Thyroid gland (tissue), 4 donors: ENCODE measurements at regions of chr17 and their contacts with region 1.

Region 1: DNA sequence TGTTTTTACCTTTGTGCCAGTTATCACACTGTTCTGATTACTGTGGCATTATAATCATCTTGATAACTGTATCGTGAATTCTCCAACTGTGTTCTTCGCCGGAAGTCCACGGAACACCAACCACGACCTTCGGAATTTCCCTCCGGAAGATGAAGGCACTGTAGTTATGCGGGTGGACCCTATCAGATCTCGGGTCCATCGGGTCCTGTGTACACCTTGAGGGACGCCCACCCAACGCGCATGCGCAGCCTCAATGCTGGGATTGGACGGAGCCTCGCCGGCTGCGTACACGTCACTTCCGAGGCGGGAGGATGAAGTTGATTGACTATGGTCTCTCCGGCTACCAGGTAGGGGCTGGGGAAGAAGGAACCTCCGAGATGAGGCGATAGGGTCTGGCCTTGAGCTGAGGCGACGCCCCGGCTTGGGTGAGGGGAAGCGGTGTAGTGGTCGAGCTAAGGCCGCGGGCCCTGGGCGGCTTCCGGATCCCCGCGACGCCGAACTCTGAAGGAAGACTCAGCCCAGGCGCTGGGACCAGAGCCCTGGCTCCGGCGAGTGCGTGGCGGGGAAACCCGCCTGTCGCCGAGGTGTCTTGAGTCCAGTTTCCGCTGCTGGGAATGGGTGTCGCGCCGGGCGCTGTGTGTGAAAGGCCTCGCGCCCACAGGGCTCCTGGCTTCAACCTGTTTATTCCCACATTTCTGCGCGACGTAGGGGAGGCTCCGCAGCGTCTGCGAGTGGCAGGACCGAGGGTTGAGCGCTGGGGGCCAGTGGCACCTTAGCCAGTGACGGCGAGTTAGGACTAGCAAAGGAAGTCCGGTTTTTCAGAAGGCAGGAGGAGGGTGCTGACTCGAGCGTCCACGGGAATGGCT is at the start of gene DHRS7B:
- DNase-seq: peak; percentile 98
- H3K4me3 ChIP-seq: peak within 1 kb of the TSS; percentile 44 to 90 (median 58)
- H3K27ac ChIP-seq: peak within 1 kb of the TSS; percentile 76 to 93 (median 83)
- H3K4me1 ChIP-seq: peaks cover 7 to 8% of the 10 kb centered on the region in 2 donors
- H3K27me3 ChIP-seq: no peaks in the 10 kb centered on the region
- CTCF ChIP-seq: no peak
- POLR2A ChIP-seq: peak in 1 of 2 donors; percentile 89
- total RNA-seq, gene DHRS7B: 34.1 to 74.1 (median 57.1) TPM

Region 2: DNA sequence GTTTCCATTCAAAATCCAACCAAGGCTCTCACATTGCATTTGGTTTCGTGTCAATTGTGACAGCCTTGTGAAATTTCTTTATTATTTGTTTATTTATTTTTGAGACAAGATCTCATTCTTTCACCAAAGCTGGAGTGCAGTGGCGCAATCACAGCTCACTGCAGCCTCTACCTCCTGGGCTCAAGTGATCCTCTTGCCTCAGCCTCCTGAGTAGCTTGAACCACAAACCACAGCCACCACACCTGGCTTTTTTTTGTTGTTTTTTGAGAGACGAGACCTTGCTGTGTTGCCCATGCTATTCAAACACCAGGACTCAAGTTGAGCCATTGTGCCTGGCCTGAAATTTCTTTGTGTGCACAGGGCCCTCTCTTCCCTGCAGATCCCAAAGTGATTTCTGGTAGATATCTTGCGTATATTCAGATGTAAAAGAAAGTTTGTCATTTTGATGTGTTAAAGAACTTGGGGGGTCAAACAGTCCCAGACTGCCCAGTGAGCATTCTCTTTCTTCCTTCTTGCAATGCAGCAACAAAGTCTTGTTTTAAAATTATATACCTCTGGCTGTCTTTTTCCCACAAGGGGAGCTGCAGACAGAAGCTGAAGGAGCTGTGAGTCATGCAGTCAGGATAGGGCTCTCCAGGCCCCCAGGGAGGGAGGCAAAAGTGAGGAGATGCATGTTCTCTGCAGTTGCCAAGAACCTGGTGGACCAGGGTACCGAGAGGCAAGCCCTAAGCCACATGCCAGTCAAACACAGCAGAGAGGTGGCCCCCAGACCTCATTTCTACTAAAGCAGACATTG is 68.6 kb before region 1 on chr17:
- intact Hi-C with region 1: no loop called
- DNase-seq: no peak
- H3K4me3 ChIP-seq: no peak overlapping the region
- H3K27ac ChIP-seq: no peak overlapping the region
- H3K4me1 ChIP-seq: no peaks in the 10 kb centered on the region
- H3K27me3 ChIP-seq: no peaks in the 10 kb centered on the region
- CTCF ChIP-seq: no peak
- POLR2A ChIP-seq: no peak

Region 3: DNA sequence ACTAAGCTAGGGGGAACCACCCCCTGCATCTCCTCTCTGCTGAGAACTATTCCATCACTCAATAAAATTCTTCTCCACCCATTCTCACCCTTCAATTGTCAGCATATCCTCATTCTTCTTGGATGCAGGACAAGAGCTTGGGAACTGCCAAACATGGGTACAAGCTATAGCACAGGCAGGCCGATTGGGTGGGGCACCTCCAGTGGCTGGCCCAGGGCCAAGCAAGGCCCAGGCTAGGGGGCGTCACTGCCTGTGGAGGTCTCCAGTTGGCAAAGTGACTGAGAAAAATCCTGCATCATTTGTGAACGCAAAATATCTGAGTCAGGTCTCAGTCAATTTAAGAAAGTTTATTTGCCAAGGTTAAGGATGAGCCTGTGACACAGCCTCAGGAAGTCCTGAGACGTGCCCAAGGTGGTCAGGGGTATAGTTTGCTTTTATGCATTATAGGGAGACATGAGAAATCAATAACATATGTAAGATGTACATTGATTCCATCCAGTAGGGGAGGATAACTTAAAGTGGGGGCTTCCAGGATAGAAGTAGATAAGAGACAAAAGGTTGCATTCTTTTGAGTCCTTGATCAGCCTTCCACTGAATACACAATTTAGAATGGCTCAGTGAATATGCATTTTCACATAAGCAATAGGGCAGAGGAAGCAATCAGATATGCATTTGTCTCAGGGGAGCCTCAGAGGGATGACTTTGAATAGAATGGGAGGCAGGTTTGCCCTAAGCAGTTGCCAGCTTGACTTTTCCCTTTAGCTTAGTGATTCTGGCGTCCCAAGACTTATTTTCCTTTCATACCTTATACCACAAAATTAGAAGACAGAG is 21.6 kb before region 1 on chr17:
- intact Hi-C with region 1: no loop called
- DNase-seq: no peak
- H3K4me3 ChIP-seq: no peak overlapping the region
- H3K27ac ChIP-seq: no peak overlapping the region
- H3K4me1 ChIP-seq: no peaks in the 10 kb centered on the region
- H3K27me3 ChIP-seq: no peaks in the 10 kb centered on the region
- CTCF ChIP-seq: no peak
- POLR2A ChIP-seq: no peak

Region 4: GRCh38 chr17:21214015-21214776 is 87.3 kb after region 1 on chr17 and contains the start of gene TMEM11:
- intact Hi-C with region 1: loop called (anchors 10 kb)
- DNase-seq: peak; percentile 97 to 98
- H3K4me3 ChIP-seq: peak within 1 kb of the TSS; percentile 67 to 97 (median 86)
- H3K27ac ChIP-seq: peak within 1 kb of the TSS; percentile 77 to 96 (median 90)
- H3K4me1 ChIP-seq: peaks cover 47 to 53% of the 10 kb centered on the region in 2 donors
- H3K27me3 ChIP-seq: no peaks in the 10 kb centered on the region
- CTCF ChIP-seq: peak in 2 of 6 experiments; percentile 2 to 25
- POLR2A ChIP-seq: peak in 1 of 2 donors; percentile 82
- total RNA-seq, gene TMEM11: 20.7 to 35.7 (median 24.7) TPM

Region 5: GRCh38 chr17:21252796-21253645 is 126.1 kb after region 1 on chr17 and contains the start of gene NATD1:
- intact Hi-C with region 1: loop called (anchors 10 kb)
- DNase-seq: peak; percentile 93 to 94
- H3K4me3 ChIP-seq: peak within 1 kb of the TSS; percentile 7 to 70 (median 45)
- H3K27ac ChIP-seq: peak within 1 kb of the TSS; percentile 66 to 84 (median 83)
- H3K4me1 ChIP-seq: peaks cover 28 to 49% of the 10 kb centered on the region in 2 donors
- H3K27me3 ChIP-seq: no peaks in the 10 kb centered on the region
- CTCF ChIP-seq: no peak
- POLR2A ChIP-seq: peak; percentile 40 to 82
- total RNA-seq, gene NATD1: 18.6 to 34.1 (median 21.2) TPM

Region 6: DNA sequence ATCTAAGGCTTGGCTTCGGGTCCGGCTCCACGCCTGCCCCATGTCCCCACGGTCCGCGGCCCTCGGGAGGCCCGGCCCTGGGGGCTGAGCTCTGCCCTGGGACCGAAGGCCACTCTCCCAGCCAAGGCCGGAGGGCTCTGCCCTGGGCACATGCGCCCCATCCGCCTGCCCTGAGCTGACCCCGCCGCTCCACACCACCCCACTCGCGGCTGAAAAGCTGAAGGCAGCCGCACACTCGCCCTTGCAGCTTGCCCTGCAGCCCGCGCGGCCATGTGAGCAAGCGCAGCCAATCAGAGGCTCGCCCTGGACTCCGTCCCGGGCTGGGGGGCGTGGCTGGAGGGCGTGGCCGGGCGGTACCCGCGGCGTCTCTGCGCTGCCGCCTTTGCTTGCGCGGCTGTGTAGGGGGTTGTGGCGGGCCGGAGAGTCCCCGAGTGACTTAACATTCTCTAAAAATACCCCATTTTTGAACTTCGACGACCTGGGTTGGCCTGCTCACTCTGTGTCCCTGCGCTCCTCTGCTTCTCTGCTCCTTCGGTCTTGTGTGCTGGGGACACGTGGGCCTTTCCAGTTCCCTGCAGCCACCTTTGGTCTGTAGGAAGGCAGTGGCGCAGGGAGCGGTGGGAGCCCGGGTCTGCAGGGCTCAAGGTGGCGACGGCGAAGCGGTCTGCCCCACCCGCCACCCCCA is 148.8 kb after region 1 on chr17:
- intact Hi-C with region 1: loop called (anchors 5 kb)
- DNase-seq: peak; percentile 94
- H3K4me3 ChIP-seq: peak overlapping the region; percentile 7 to 54 (median 12)
- H3K27ac ChIP-seq: peak overlapping the region; percentile 35 to 83 (median 77)
- H3K4me1 ChIP-seq: peaks cover 25 to 40% of the 10 kb centered on the region in 2 donors
- H3K27me3 ChIP-seq: no peaks in the 10 kb centered on the region
- CTCF ChIP-seq: peak in 1 of 6 experiments; percentile 5
- POLR2A ChIP-seq: peak in 1 of 2 donors; percentile 88